GM12878 (cell line): ENCODE measurements at regions of chr17 and their contacts with region 1.

Region 1: GRCh38 chr17:50865984-50866774 is at the start of gene TOB1:
- DNase-seq: peak; percentile 84
- ATAC-seq: peak; percentile 88
- H3K4me3 ChIP-seq: peak within 1 kb of the TSS; percentile 92
- H3K27ac ChIP-seq: peak within 1 kb of the TSS; percentile 98
- H3K4me1 ChIP-seq: peaks cover under 1% of the 10 kb centered on the region; the same call in 1 of the 2 replicates
- H3K27me3 ChIP-seq: no peaks in the 10 kb centered on the region
- CTCF ChIP-seq: no peak
- EP300 ChIP-seq: no peak; a peak in 1 of 4 replicates
- POLR2A ChIP-seq: peak; percentile 99
- RAD21 ChIP-seq: no peak
- polyA plus RNA-seq, gene TOB1: 19.5 to 28.3 TPM

Region 2: GRCh38 chr17:50834429-50835300 is 31.5 kb before region 1 on chr17:
- CTCF ChIA-PET with region 1: no interaction called
- POLR2A ChIA-PET with region 1: no interaction called
- RAD21 ChIA-PET with region 1: no interaction called
- SMC1A ChIA-PET with region 1: no interaction called
- in situ Hi-C with region 1: no loop called
- intact Hi-C with region 1: no loop called
- DNase-seq: no peak
- ATAC-seq: no peak
- H3K4me3 ChIP-seq: no peak overlapping the region
- H3K27ac ChIP-seq: no peak overlapping the region
- H3K4me1 ChIP-seq: peaks cover 4% of the 10 kb centered on the region; the same call in 1 of the 2 replicates
- H3K27me3 ChIP-seq: peaks cover 2 to 4% of the 10 kb centered on the region in 2 experiments; a peak in 3 of 4 replicates
- CTCF ChIP-seq: no peak
- EP300 ChIP-seq: no peak
- POLR2A ChIP-seq: no peak
- RAD21 ChIP-seq: no peak

Region 3: DNA sequence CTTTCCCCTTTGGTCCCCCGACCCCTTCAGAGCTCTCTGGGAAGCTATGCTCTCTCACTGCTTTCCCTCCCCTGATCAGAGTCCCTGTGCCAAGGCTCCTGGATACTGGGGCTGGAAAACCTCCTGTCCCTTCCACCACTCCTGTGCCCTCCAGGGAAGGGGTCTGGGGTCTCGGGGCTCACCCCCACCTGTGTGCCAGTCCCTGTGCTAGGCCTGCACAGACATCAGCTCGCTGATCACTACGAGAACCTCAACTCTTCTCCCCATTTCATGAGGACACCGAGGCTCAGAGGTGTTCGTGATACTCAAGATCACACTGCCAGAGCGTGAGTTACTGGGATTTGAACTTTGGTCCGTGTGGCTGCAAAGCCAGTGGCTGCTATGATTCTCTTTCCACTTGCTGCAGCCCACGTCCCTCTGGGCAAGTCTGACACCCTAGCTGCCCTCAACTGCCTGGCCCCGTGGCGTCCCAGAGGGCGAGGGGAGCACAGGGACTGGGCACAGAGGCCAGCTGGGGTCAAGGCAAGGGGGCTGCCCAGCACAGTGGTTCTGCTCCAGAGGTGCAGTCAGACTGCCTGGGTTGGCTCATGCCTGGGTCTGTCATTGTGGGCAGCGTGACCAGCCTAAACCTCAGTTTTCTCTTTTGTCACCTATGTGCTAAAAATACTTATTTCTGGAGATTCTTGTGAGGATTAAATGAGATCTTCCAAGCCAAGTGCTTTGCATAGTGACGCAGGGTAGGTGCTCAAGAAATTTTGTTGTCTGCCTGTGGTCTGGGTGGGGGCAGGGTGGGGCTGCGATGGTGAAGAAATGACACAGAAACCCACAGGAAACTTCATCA is 43.8 kb after region 1 on chr17:
- CTCF ChIA-PET with region 1: no interaction called
- POLR2A ChIA-PET with region 1: interaction called, 7 read pairs
- RAD21 ChIA-PET with region 1: interaction called, 3 read pairs
- SMC1A ChIA-PET with region 1: no interaction called
- in situ Hi-C with region 1: loop called (anchors 5 kb)
- intact Hi-C with region 1: no loop called
- DNase-seq: no peak
- ATAC-seq: peak; percentile 29; the same call in 2 of the 3 replicates
- H3K4me3 ChIP-seq: no peak overlapping the region
- H3K27ac ChIP-seq: no peak overlapping the region
- H3K4me1 ChIP-seq: no peaks in the 10 kb centered on the region
- H3K27me3 ChIP-seq: no peaks in the 10 kb centered on the region; a peak in 1 of 4 replicates
- CTCF ChIP-seq: no peak
- EP300 ChIP-seq: no peak
- POLR2A ChIP-seq: no peak
- RAD21 ChIP-seq: no peak

Region 4: GRCh38 chr17:50956750-50957523 is 90.8 kb after region 1 on chr17:
- CTCF ChIA-PET with region 1: interaction called, 14 read pairs
- POLR2A ChIA-PET with region 1: interaction called, 5 read pairs
- RAD21 ChIA-PET with region 1: interaction called, 5 read pairs
- SMC1A ChIA-PET with region 1: interaction called, 5 read pairs
- in situ Hi-C with region 1: no loop called
- intact Hi-C with region 1: no loop called
- DNase-seq: no peak
- ATAC-seq: peak; percentile 96
- H3K4me3 ChIP-seq: no peak overlapping the region
- H3K27ac ChIP-seq: no peak overlapping the region
- H3K4me1 ChIP-seq: peaks cover 11% of the 10 kb centered on the region
- H3K27me3 ChIP-seq: no peaks in the 10 kb centered on the region
- CTCF ChIP-seq: peak; percentile 73 to 80 (median 75)
- EP300 ChIP-seq: no peak
- POLR2A ChIP-seq: no peak
- RAD21 ChIP-seq: peak; percentile 71

Region 5: DNA sequence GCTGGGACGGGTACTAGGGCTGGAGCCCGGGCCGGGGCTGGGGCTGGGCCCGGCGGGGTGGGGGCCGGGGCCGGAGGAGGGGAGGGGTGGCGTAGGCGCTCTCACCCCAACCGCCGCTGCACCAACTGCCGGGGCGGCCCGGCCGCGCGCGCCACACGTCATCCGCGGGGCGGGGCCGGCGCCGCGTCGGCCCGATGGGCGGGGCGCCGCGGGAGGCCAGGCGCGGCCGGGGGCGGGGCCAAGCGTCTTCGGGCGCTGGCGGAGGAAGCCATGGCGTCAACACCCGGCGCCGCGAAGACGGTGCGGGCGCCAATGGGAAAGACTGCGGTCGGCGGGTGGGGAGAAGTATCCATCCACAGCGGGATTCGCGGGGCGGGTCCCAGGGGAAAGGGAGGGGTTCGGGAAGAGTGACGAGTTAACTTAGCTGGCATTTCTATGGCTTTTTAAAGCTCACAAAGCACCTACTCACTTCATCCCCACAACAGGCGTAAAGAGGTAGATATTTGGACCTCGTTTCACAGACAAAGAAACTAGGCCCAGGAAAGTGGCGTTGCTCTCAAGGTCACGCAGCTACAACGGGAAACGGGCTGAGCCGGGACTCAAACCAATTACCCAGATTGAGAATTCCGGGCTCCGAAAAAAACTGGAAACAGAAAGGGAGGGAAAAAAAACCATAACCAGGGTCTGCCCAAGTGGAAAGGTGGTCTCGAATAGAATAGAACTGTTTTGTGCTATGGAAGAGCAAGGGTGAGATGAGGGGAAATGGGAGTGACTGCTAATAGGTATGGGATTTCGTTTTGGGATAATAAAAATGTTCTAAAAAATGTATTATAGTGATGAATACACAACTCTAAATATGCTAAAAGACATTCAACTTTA is 254.8 kb after region 1 on chr17 and contains the start of gene SPAG9:
- CTCF ChIA-PET with region 1: no interaction called
- POLR2A ChIA-PET with region 1: interaction called, 18 read pairs
- RAD21 ChIA-PET with region 1: interaction called, 5 read pairs
- SMC1A ChIA-PET with region 1: no interaction called
- in situ Hi-C with region 1: no loop called
- intact Hi-C with region 1: no loop called
- DNase-seq: peak; percentile 60
- ATAC-seq: peak; percentile 78
- H3K4me3 ChIP-seq: peak within 1 kb of the TSS; percentile 85
- H3K27ac ChIP-seq: peak within 1 kb of the TSS; percentile 81
- H3K4me1 ChIP-seq: peaks cover 15% of the 10 kb centered on the region; the same call in 1 of the 2 replicates
- H3K27me3 ChIP-seq: no peaks in the 10 kb centered on the region
- CTCF ChIP-seq: no peak
- EP300 ChIP-seq: peak in 1 of 2 experiments; percentile 28; a peak in 1 of 4 replicates
- POLR2A ChIP-seq: peak; percentile 88
- RAD21 ChIP-seq: no peak
- polyA plus RNA-seq, gene SPAG9: 6.6 to 6.8 TPM